Activated CD4-positive, alpha-beta T cell treated with anti-CD3 and anti-CD28 coated beads, Interleukin-2, amount 10 ng/mL, durations not matched to agents 24 days and 14 days (primary cell): ENCODE measurements at regions of chr12 and their contacts with region 1.

Region 1: GRCh38 chr12:122182887-122183585 is at the start of gene LRRC43:
- DNase-seq: peak; percentile 82
- H3K4me3 Mint-ChIP-seq: peak within 1 kb of the TSS; percentile 82
- H3K27ac Mint-ChIP-seq: no peak within 1 kb of the TSS
- H3K4me1 Mint-ChIP-seq: peaks cover 10% of the 10 kb centered on the region
- H3K27me3 Mint-ChIP-seq: peaks cover 25% of the 10 kb centered on the region
- total RNA-seq, gene LRRC43: 0.33 TPM in 1 of 2 replicates, not detected in the other

Region 2: GRCh38 chr12:122148657-122149056 is 34.4 kb before region 1 on chr12:
- intact Hi-C with region 1: no loop called
- DNase-seq: no peak
- H3K4me3 Mint-ChIP-seq: no peak overlapping the region
- H3K27ac Mint-ChIP-seq: no peak overlapping the region
- H3K4me1 Mint-ChIP-seq: no peaks in the 10 kb centered on the region
- H3K27me3 Mint-ChIP-seq: peaks cover 8% of the 10 kb centered on the region

Region 3: DNA sequence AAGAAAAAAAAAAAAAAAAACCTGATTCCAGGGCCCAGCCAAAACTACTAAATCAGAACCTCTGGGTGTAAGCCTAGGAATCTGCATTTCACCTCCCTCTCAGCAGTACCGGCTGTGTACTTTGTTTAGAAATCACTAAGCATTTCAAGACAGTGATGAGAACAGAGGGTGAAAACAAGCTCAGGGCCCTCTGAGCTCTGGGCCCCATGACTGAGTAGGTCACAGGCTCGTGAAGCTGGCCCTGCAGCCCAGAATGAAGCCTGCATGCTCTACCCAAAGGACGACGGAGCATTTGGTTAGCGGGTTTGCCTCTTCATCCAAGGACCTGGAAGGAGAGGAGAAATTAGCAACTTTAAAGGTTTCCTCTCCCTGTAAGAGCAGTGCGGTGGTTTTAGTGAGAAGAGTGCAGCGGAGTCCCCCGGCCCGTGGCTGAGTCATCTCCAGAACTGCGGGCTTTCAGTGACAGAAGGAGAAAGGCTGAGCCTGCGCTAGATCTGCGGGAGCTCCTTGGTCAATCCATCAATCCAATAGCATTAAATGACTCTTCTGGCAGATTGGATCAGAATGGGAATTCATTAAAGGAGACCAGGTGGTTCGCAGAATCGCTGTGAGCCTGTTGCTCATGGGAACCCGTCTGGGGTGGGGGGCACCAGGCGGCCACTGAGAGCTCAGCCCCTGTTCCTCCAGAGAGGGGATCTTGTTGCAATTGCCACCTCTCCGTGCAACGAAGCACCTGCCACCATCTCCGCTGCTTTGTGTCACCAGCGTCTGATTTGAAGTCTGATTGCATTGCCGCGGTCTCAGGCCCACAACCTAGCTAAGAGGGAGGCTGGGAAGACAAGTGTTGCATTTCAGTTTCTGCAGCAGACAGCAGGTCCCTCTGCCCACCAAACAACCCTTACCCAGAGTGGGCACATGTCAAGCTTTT is 16.4 kb before region 1 on chr12:
- intact Hi-C with region 1: loop called (anchors 2 kb)
- DNase-seq: peak; percentile 75
- H3K4me3 Mint-ChIP-seq: no peak overlapping the region
- H3K27ac Mint-ChIP-seq: peak overlapping the region; percentile 34
- H3K4me1 Mint-ChIP-seq: peaks cover 15% of the 10 kb centered on the region
- H3K27me3 Mint-ChIP-seq: peaks cover 5% of the 10 kb centered on the region